H1 (cell line): ENCODE measurements at regions of chr17 and their contacts with region 1.

Region 1: DNA sequence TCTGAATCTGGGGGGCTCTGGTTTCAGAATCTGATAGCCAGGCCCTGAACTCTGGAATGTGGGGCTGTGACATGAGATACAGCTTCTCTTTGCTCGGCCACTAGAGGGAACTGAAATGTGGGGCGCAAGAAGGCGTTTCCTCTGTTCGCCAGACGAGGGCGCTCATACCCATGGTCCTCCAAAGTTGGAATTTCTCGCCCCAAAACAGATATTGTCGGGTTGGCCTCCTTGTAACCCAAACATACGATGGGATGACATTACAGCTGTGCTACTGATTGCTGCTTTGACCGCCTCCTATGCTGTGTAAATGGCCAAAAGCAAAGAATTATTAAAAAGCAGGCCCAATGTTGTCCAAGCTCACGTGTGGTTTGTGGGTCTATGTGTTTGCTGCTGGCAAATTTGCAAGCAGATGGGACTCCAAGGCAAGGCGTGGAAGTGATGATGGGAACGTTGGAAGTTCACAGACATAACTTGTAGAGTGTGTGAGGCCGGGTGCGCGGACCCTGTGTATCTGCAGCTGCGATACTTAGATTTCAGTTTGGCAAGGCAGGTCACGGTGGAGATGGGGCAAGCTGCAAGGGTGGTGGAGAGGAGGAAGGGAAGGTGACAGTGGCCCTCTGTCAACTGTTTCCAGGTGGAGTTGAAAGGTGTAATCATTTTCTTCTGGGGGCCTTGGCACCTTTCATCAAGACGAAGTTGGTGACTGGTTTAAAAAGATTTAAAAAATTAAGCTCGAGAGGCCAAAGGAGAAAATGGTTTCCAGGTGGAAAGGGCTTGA is 13.0 kb upstream of the MSI2 start:
- DNase-seq: peak; percentile 47 to 92
- H3K4me3 ChIP-seq: no peak overlapping the region
- H3K27ac ChIP-seq: no peak overlapping the region
- H3K4me1 ChIP-seq: peaks cover 0 to 3% (median under 1%) of the 10 kb centered on the region in 4 experiments; a peak in 2 of 7 replicates
- H3K27me3 ChIP-seq: no peaks in the 10 kb centered on the region
- CTCF ChIP-seq: peak; percentile 100
- EP300 ChIP-seq: no peak
- POLR2A ChIP-seq: no peak
- RAD21 ChIP-seq: peak; percentile 95 to 98

Region 2: GRCh38 chr17:57097832-57098421 is 145.4 kb before region 1 on chr17:
- CTCF ChIA-PET with region 1: no interaction called
- POLR2A ChIA-PET with region 1: no interaction called
- DNase-seq: no peak
- H3K4me3 ChIP-seq: no peak overlapping the region
- H3K27ac ChIP-seq: no peak overlapping the region
- H3K4me1 ChIP-seq: peaks cover 8 to 32% (median 16%) of the 10 kb centered on the region in 4 experiments
- H3K27me3 ChIP-seq: no peaks in the 10 kb centered on the region
- CTCF ChIP-seq: no peak
- EP300 ChIP-seq: no peak
- POLR2A ChIP-seq: no peak
- RAD21 ChIP-seq: no peak

Region 3: DNA sequence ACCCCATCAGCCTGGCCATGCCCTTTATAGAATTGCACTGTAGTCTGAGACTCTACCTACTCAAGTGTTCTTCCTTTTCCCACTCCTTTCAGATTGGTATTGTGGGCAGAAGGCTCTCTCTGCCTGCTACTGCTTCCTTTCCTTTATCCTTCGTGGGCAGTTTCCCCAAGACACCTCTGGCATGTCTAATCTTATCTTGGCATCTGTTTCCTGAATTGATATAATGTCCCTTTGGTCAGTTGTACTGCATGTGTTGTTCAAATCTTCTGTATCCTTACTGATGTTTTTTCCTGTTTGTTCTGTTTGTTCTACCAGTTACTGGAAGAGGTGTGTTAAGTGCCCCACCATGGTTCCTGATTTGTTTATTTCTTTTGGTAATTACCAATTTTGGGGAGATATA is 16.6 kb before region 1 on chr17:
- CTCF ChIA-PET with region 1: interaction called, 18 read pairs
- POLR2A ChIA-PET with region 1: no interaction called
- DNase-seq: no peak
- H3K4me3 ChIP-seq: no peak overlapping the region
- H3K27ac ChIP-seq: no peak overlapping the region
- H3K4me1 ChIP-seq: no peaks in the 10 kb centered on the region
- H3K27me3 ChIP-seq: no peaks in the 10 kb centered on the region
- CTCF ChIP-seq: no peak
- EP300 ChIP-seq: no peak
- POLR2A ChIP-seq: no peak
- RAD21 ChIP-seq: no peak

Region 4: GRCh38 chr17:57271821-57272220 is 28.5 kb after region 1 on chr17:
- CTCF ChIA-PET with region 1: interaction called, 38 read pairs
- POLR2A ChIA-PET with region 1: no interaction called
- DNase-seq: no peak
- H3K4me3 ChIP-seq: no peak overlapping the region
- H3K27ac ChIP-seq: no peak overlapping the region
- H3K4me1 ChIP-seq: peaks cover 4 to 10% (median 7%) of the 10 kb centered on the region in 4 experiments; a peak in 5 of 7 replicates
- H3K27me3 ChIP-seq: no peaks in the 10 kb centered on the region; a peak in 1 of 7 replicates
- CTCF ChIP-seq: no peak
- EP300 ChIP-seq: no peak
- POLR2A ChIP-seq: no peak
- RAD21 ChIP-seq: no peak

Region 5: GRCh38 chr17:57350277-57350676 is 106.9 kb after region 1 on chr17:
- CTCF ChIA-PET with region 1: interaction called, 13 read pairs
- POLR2A ChIA-PET with region 1: no interaction called
- DNase-seq: no peak
- H3K4me3 ChIP-seq: no peak overlapping the region
- H3K27ac ChIP-seq: no peak overlapping the region
- H3K4me1 ChIP-seq: peaks cover 0 to 2% (median 0%) of the 10 kb centered on the region in 4 experiments; a peak in 1 of 7 replicates
- H3K27me3 ChIP-seq: no peaks in the 10 kb centered on the region
- CTCF ChIP-seq: no peak
- EP300 ChIP-seq: no peak
- POLR2A ChIP-seq: no peak
- RAD21 ChIP-seq: no peak

Region 6: DNA sequence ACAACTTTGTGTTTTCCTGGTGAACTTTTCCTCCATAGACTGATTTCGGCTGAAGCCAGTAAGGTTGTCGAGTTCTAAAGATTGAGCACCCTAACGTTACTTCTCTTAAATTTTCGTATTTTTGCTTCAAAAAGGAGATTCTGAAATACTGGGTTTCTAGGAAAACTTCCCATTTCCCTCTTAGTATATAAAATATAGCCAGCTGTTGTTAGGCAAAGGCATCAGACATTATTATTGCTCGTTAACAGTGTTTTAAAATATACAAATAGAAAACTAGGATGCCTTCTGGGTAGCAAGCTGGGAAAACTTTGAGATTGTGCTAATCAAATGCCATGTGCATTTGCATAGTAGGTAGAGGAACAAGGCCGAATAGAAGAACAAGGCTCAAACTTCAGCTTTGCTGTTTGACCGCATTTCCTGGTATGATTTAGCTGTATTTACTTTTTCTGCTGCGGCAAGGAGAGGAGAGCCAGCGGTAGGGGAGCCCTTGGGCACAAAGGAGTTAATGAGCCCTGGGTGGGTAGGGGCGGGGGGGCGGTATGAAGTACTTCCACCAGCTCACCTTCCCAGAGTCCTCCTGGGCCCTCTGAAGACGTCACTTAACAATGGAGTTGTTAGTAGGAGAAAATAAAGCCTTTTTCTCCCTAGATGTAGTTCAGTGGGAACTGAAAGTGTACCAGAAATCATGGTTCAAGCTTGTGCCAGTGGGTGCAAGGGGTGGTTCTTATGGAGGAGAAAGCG is 164.9 kb after region 1 on chr17:
- CTCF ChIA-PET with region 1: interaction called, 119 read pairs
- POLR2A ChIA-PET with region 1: no interaction called
- DNase-seq: no peak
- H3K4me3 ChIP-seq: peak overlapping the region in 1 of 4 experiments; percentile 39; a peak in 2 of 8 replicates
- H3K27ac ChIP-seq: peak overlapping the region; percentile 62
- H3K4me1 ChIP-seq: peaks cover 12 to 27% (median 26%) of the 10 kb centered on the region in 4 experiments
- H3K27me3 ChIP-seq: no peaks in the 10 kb centered on the region
- CTCF ChIP-seq: no peak
- EP300 ChIP-seq: no peak
- POLR2A ChIP-seq: no peak
- RAD21 ChIP-seq: 0 out of 4 replicates have a peak, but pooled peaks have one; percentile 10 to 11

Region 7: GRCh38 chr17:57468932-57469775 is 225.8 kb after region 1 on chr17:
- CTCF ChIA-PET with region 1: interaction called, 12 read pairs
- POLR2A ChIA-PET with region 1: no interaction called
- DNase-seq: no peak
- H3K4me3 ChIP-seq: no peak overlapping the region
- H3K27ac ChIP-seq: no peak overlapping the region
- H3K4me1 ChIP-seq: peaks cover 10 to 47% (median 43%) of the 10 kb centered on the region in 4 experiments
- H3K27me3 ChIP-seq: no peaks in the 10 kb centered on the region
- CTCF ChIP-seq: no peak
- EP300 ChIP-seq: no peak
- POLR2A ChIP-seq: no peak
- RAD21 ChIP-seq: no peak

Region 8: DNA sequence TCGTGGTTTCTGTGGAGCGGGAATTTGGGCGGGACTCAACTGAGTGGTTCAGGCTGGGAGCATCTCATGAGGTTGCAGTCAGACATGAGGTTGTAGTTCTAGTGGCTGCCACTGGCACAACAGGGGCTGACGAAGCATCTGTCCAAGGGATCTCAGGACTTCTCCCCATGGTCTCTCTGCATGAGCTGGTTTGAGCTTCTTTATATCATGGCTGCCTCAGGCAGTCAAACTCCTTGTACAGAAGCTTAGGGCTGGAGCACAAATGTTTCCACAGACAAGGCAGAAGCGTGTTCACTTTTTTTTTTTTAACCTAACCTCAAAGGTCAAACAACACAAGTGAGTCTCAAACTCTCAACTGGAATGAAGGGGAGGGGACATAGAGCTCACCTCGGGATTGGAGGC is 256.3 kb after region 1 on chr17:
- CTCF ChIA-PET with region 1: no interaction called
- POLR2A ChIA-PET with region 1: no interaction called
- DNase-seq: no peak
- H3K4me3 ChIP-seq: no peak overlapping the region
- H3K27ac ChIP-seq: no peak overlapping the region
- H3K4me1 ChIP-seq: no peaks in the 10 kb centered on the region; a peak in 2 of 7 replicates
- H3K27me3 ChIP-seq: no peaks in the 10 kb centered on the region
- CTCF ChIP-seq: no peak
- EP300 ChIP-seq: no peak
- POLR2A ChIP-seq: no peak
- RAD21 ChIP-seq: no peak; a peak in 1 of 4 replicates

Region 9: GRCh38 chr17:57597531-57598453 is 354.4 kb after region 1 on chr17:
- CTCF ChIA-PET with region 1: interaction called, 14 read pairs
- POLR2A ChIA-PET with region 1: no interaction called
- DNase-seq: peak; percentile 49 to 79
- H3K4me3 ChIP-seq: no peak overlapping the region
- H3K27ac ChIP-seq: no peak overlapping the region
- H3K4me1 ChIP-seq: peaks cover 0 to 3% (median 1%) of the 10 kb centered on the region in 4 experiments; a peak in 2 of 7 replicates
- H3K27me3 ChIP-seq: no peaks in the 10 kb centered on the region
- CTCF ChIP-seq: peak; percentile 69 to 85 (median 83)
- EP300 ChIP-seq: no peak
- POLR2A ChIP-seq: no peak
- RAD21 ChIP-seq: peak; percentile 82 to 85